ENCODE measurements at regions of chr15 and their contacts with region 1.

Region 1: DNA sequence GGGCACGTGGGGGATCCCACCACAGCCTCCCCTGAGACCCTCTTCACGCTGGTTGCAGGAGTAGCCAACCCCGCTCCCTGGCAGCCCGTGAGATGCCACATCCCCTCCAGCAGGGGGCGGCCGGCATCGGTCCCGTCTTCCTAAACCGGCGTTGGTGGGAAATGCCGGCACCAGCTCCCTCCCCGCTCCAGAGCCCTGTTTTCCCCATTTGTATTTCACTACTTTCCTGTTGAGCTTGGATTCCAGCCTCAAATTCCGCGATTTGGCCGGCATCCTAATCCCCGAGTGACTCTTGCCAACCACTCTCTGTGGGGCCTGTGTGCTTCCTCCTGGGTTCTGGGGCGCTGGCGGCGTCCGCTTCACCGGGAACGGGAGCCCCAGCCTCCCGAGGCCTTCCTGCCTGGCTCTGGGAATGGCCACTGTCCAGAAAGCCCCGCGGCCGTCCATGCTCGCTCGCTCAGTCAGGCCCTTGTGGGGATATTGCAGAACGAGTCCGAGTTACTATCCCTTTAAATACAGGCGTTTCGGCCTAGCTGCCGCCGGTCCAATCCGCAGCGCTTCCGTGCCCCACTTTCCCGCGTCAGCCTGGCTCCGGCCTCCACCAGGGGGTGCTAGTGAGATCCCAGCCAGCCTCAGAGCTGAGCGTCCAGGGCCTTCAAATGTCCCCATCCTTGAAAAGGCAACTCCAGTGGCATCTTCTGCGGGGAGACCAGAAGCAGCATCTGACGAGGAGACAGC is 8.1 kb upstream of the ADAMTS17 start:
- DNase-seq: peak; percentile 90
- ATAC-seq: peak; percentile 94
- H3K4me3 Mint-ChIP-seq: peak overlapping the region; percentile 85
- H3K27ac Mint-ChIP-seq: peak overlapping the region; percentile 92
- H3K4me1 Mint-ChIP-seq: peaks cover 5% of the 10 kb centered on the region
- H3K27me3 Mint-ChIP-seq: peaks cover 10% of the 10 kb centered on the region
- CTCF ChIP-seq: peak; percentile 96

Region 2: GRCh38 chr15:99928429-99928981 is 421.4 kb before region 1 on chr15:
- CTCF ChIA-PET with region 1: interaction called, 10 read pairs
- POLR2A ChIA-PET with region 1: no interaction called
- intact Hi-C with region 1: no loop called
- DNase-seq: peak; percentile 86
- ATAC-seq: peak; percentile 93
- H3K4me3 Mint-ChIP-seq: peak overlapping the region; percentile 80
- H3K27ac Mint-ChIP-seq: peak overlapping the region; percentile 85
- H3K4me1 Mint-ChIP-seq: peaks cover 9% of the 10 kb centered on the region
- H3K27me3 Mint-ChIP-seq: peaks cover 4% of the 10 kb centered on the region
- CTCF ChIP-seq: peak; percentile 72

Region 3: DNA sequence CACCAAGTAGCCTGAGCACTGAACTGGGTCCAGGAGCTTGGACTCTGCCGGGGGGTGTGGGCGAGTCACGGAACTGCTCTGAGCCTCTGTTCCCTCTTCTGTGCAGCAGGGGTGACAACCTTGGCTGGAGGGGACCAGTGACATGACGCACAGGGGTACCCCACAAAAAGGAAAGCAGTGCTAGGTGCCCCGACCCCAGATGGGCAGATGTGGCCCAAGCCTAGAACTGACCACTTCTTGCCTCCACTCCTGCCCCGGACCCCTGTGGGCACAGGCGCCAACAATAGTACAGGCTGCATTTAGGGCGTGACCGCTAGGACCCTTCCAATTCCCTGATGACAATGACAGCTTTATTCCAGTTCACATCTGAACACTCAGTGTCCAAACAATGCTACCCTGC is 360.8 kb before region 1 on chr15:
- CTCF ChIA-PET with region 1: no interaction called
- POLR2A ChIA-PET with region 1: no interaction called
- intact Hi-C with region 1: no loop called
- DNase-seq: no peak
- ATAC-seq: no peak
- H3K4me3 Mint-ChIP-seq: no peak overlapping the region
- H3K27ac Mint-ChIP-seq: no peak overlapping the region
- H3K4me1 Mint-ChIP-seq: no peaks in the 10 kb centered on the region
- H3K27me3 Mint-ChIP-seq: no peaks in the 10 kb centered on the region
- CTCF ChIP-seq: no peak

Region 4: DNA sequence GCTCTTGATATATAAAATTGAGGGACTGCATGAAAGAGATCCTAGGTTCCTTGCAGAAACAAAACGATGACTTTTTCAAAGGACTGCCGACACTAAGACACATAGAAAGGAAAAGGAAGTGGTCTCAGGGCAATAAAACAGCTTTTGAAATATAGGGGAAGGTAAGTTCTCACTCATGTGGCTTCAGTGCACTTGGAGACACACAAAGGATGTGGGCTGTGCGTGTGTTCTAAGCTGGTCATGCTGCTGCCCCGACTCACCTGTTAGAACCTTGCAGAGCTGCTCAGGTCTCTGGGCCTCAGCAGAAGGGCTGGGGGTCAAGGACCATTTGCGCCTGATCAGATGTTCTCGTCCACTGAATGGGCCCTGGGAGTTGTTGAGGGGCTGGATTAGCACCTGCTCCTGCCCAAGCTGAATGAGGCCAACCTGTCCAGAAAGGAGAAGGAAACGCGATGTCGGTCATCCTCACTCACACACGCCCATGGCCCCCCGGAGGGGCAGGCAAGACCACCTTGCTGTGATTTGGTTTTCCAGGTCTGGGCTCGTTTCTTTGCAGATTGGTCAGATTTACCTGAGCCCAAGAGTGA is 19.1 kb before region 1 on chr15:
- CTCF ChIA-PET with region 1: interaction called, 154 read pairs
- POLR2A ChIA-PET with region 1: interaction called, 3 read pairs
- intact Hi-C with region 1: no loop called
- DNase-seq: peak; percentile 63
- ATAC-seq: peak; percentile 84
- H3K4me3 Mint-ChIP-seq: peak overlapping the region; percentile 55
- H3K27ac Mint-ChIP-seq: peak overlapping the region; percentile 77
- H3K4me1 Mint-ChIP-seq: peaks cover 60% of the 10 kb centered on the region
- H3K27me3 Mint-ChIP-seq: peaks cover 3% of the 10 kb centered on the region
- CTCF ChIP-seq: no peak

Region 5: DNA sequence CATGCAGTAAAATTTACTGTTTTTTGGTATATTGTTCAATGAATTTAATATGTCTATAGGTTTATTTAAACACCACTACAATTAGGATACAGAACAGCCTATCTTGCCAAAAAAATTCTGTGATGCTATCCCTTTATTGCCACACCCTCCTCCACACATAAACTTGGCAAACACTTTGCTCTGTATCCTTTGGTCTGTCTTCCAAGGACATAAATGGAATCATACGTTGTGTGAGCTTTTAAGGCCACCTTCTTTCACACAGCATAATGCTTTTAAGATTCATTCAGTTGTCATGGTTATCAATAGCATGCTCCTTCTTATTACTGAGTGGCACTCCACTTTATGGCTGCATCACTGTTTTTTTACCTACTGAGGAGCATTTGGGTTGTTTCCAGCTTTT is 107.3 kb after region 1 on chr15:
- CTCF ChIA-PET with region 1: interaction called, 11 read pairs
- POLR2A ChIA-PET with region 1: no interaction called
- intact Hi-C with region 1: no loop called
- DNase-seq: no peak
- ATAC-seq: no peak
- H3K4me3 Mint-ChIP-seq: no peak overlapping the region
- H3K27ac Mint-ChIP-seq: no peak overlapping the region
- H3K4me1 Mint-ChIP-seq: no peaks in the 10 kb centered on the region
- H3K27me3 Mint-ChIP-seq: no peaks in the 10 kb centered on the region
- CTCF ChIP-seq: no peak

Region 6: GRCh38 chr15:100572362-100572983 is 222.6 kb after region 1 on chr15:
- CTCF ChIA-PET with region 1: interaction called, 72 read pairs
- POLR2A ChIA-PET with region 1: no interaction called
- intact Hi-C with region 1: loop called (anchors 10 kb)
- DNase-seq: no peak
- ATAC-seq: no peak
- H3K4me3 Mint-ChIP-seq: no peak overlapping the region
- H3K27ac Mint-ChIP-seq: no peak overlapping the region
- H3K4me1 Mint-ChIP-seq: peaks cover 44% of the 10 kb centered on the region
- H3K27me3 Mint-ChIP-seq: no peaks in the 10 kb centered on the region
- CTCF ChIP-seq: peak; percentile 57

Region 7: GRCh38 chr15:100596792-100597191 is 246.9 kb after region 1 on chr15:
- CTCF ChIA-PET with region 1: interaction called, 43 read pairs
- POLR2A ChIA-PET with region 1: interaction called, 3 read pairs
- intact Hi-C with region 1: no loop called
- DNase-seq: peak; percentile 99
- ATAC-seq: peak; percentile 84
- H3K4me3 Mint-ChIP-seq: peak overlapping the region; percentile 72
- H3K27ac Mint-ChIP-seq: peak overlapping the region; percentile 98
- H3K4me1 Mint-ChIP-seq: peaks cover 71% of the 10 kb centered on the region
- H3K27me3 Mint-ChIP-seq: no peaks in the 10 kb centered on the region
- CTCF ChIP-seq: no peak

Region 8: GRCh38 chr15:100627789-100628395 is 278.0 kb after region 1 on chr15:
- CTCF ChIA-PET with region 1: interaction called, 11 read pairs
- POLR2A ChIA-PET with region 1: no interaction called
- intact Hi-C with region 1: no loop called
- DNase-seq: peak; percentile 74
- ATAC-seq: peak; percentile 93
- H3K4me3 Mint-ChIP-seq: no peak overlapping the region
- H3K27ac Mint-ChIP-seq: no peak overlapping the region
- H3K4me1 Mint-ChIP-seq: peaks cover 9% of the 10 kb centered on the region
- H3K27me3 Mint-ChIP-seq: no peaks in the 10 kb centered on the region
- CTCF ChIP-seq: peak; percentile 81

Measured in activated CD8-positive, alpha-beta T cell treated with anti-CD3 and anti-CD28 coated beads for 36 hours (primary cell).